ENCODE measurements at regions of chr14 and their contacts with region 1.

Region 1: GRCh38 chr14:71403656-71404055 is 496.4 kb downstream of the PCNX1 start:
- DNase-seq: peak in 3 of 5 donors; percentile 1 to 28 (median 20)
- H3K4me3 ChIP-seq: no peak overlapping the region
- H3K4me3 Mint-ChIP-seq: no peak overlapping the region
- H3K27ac ChIP-seq: no peak overlapping the region
- H3K27ac Mint-ChIP-seq: peak overlapping the region in 1 of 8 donors; percentile 52
- H3K4me1 ChIP-seq: peaks cover 22% of the 10 kb centered on the region
- H3K4me1 Mint-ChIP-seq: peaks cover 20 to 35% (median 31%) of the 10 kb centered on the region in 3 donors
- H3K27me3 ChIP-seq: no peaks in the 10 kb centered on the region
- H3K27me3 Mint-ChIP-seq: no peaks in the 10 kb centered on the region

Region 2: DNA sequence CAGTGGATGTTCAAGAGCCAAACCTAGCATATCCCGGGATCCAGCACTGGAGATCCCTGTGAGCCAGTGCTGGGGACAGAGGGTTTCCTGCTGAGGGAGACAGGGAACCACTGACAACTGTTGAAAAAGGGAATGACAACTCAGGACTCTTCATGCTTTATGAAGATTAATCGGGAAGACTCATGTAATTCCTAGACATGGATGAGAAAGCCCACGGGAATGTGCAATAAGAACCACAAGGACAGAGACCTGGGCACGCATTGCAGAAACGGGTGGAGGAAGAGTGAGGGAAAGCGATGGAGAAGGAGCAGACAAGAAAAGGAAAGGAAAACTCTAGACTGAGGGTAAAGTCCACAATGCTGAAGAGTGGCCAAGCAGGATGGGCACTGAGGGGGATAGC is 200.3 kb before region 1 on chr14:
- CTCF ChIA-PET with region 1: no interaction called
- POLR2A ChIA-PET with region 1: interaction called, 11 read pairs
- DNase-seq: no peak
- H3K4me3 ChIP-seq: no peak overlapping the region
- H3K4me3 Mint-ChIP-seq: no peak overlapping the region
- H3K27ac ChIP-seq: no peak overlapping the region
- H3K27ac Mint-ChIP-seq: peak overlapping the region in 1 of 8 donors; percentile 64
- H3K4me1 ChIP-seq: no peaks in the 10 kb centered on the region
- H3K4me1 Mint-ChIP-seq: peaks cover 0 to 4% (median 0%) of the 10 kb centered on the region in 3 donors
- H3K27me3 ChIP-seq: no peaks in the 10 kb centered on the region
- H3K27me3 Mint-ChIP-seq: peaks cover 0 to 2% of the 10 kb centered on the region in 2 donors

Region 3: DNA sequence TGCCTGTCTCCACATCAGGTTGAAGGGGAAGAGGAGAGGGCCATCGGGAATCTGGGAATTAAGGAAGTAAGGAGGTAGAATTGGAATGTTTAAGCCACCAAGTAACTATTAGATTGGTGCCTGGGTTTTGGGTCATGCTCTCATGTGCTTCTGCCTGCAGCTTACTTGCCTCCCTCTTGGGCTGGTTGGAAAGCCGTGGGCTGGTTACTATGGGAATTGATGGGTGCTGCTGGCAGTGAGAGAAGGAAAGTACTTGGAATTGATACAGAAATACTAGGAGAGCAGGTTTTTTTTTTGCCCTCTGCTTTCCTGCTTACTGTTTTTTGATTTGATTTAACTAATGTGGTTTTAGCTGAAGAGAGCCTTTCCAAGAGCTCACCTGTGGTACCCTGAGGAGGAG is 35.0 kb after region 1 on chr14:
- CTCF ChIA-PET with region 1: no interaction called
- POLR2A ChIA-PET with region 1: no interaction called
- DNase-seq: no peak
- H3K4me3 ChIP-seq: no peak overlapping the region
- H3K4me3 Mint-ChIP-seq: peak overlapping the region in 1 of 7 donors; percentile 46
- H3K27ac ChIP-seq: no peak overlapping the region
- H3K27ac Mint-ChIP-seq: peak overlapping the region in 1 of 8 donors; percentile 77
- H3K4me1 ChIP-seq: no peaks in the 10 kb centered on the region
- H3K4me1 Mint-ChIP-seq: peaks cover 9 to 26% (median 20%) of the 10 kb centered on the region in 3 donors
- H3K27me3 ChIP-seq: no peaks in the 10 kb centered on the region
- H3K27me3 Mint-ChIP-seq: no peaks in the 10 kb centered on the region

Measured in CD8-positive, alpha-beta memory T cell (primary cell).